Right cardiac atrium (tissue), 5 donors: ENCODE measurements at regions of chr17 and their contacts with region 1.

Region 1: DNA sequence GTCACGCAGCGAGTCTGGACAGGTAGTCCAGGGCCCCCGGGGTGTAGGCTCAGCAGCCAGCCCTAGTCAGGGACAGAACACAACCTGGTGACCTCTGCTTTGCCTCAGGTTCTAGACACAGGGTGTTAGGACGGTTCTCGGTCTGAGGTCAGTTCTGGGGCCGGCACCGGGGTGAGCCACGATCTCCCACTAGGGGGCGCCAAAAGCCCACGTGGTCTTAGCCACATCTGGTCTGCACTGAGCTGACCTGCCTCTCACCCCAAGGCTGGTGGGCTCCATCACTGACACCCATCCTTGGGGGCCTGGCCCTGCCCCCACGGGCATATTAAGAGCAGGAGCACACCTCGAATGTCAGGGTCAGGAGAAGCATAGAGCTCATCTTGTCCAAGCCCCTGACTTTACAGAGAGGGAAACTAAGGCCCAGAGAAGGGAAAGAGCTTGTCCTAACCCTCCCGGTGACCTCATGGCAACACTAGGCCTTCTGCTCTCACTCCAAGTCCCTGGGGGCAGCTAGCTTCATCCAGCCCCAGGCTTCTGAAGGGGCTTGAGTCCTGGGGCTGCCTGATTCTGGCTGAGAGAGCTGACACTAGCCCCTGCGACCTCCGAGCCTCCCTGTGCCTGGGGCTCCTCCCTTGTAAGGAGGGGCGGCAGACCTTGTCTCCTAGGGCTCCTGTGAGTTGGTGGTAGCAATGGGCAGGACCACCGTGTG is 9.0 kb downstream of the SLC5A10 start:
- DNase-seq: peak; percentile 78 to 93 (median 93)
- ATAC-seq: peak; percentile 82 to 84
- H3K4me3 ChIP-seq: no peak overlapping the region
- H3K27ac ChIP-seq: no peak overlapping the region
- H3K4me1 ChIP-seq: no peaks in the 10 kb centered on the region
- H3K27me3 ChIP-seq: no peaks in the 10 kb centered on the region

Region 2: GRCh38 chr17:19011111-19011505 is 50.2 kb after region 1 on chr17:
- intact Hi-C with region 1: loop called in 1 of 4 experiments (anchors 5 kb)
- DNase-seq: peak in 1 of 3 donors; percentile 2
- ATAC-seq: peak in 1 of 2 donors; percentile 22
- H3K4me3 ChIP-seq: no peak overlapping the region
- H3K27ac ChIP-seq: no peak overlapping the region
- H3K4me1 ChIP-seq: no peaks in the 10 kb centered on the region
- H3K27me3 ChIP-seq: no peaks in the 10 kb centered on the region